ENCODE measurements at regions of chr11 and their contacts with region 1.

Region 1: GRCh38 chr11:62427630-62428233 is 8.9 kb downstream of the SCGB1A1 start:
- DNase-seq: peak; percentile 35
- ATAC-seq: peak; percentile 34
- H3K4me3 Mint-ChIP-seq: peak overlapping the region; percentile 2
- H3K27ac Mint-ChIP-seq: peak overlapping the region; percentile 84
- H3K4me1 Mint-ChIP-seq: peaks cover 79% of the 10 kb centered on the region
- H3K27me3 Mint-ChIP-seq: peaks cover 6% of the 10 kb centered on the region

Region 2: GRCh38 chr11:62295504-62295903 is 132.2 kb before region 1 on chr11:
- CTCF ChIA-PET with region 1: no interaction called
- POLR2A ChIA-PET with region 1: no interaction called
- DNase-seq: peak; percentile 33
- ATAC-seq: no peak
- H3K4me3 Mint-ChIP-seq: no peak overlapping the region
- H3K27ac Mint-ChIP-seq: no peak overlapping the region
- H3K4me1 Mint-ChIP-seq: no peaks in the 10 kb centered on the region
- H3K27me3 Mint-ChIP-seq: peaks cover 14% of the 10 kb centered on the region

Region 3: GRCh38 chr11:62400760-62401159 is 27.0 kb before region 1 on chr11:
- CTCF ChIA-PET with region 1: interaction called, 96 read pairs
- POLR2A ChIA-PET with region 1: no interaction called
- DNase-seq: no peak
- ATAC-seq: no peak
- H3K4me3 Mint-ChIP-seq: no peak overlapping the region
- H3K27ac Mint-ChIP-seq: no peak overlapping the region
- H3K4me1 Mint-ChIP-seq: peaks cover 51% of the 10 kb centered on the region
- H3K27me3 Mint-ChIP-seq: peaks cover 2% of the 10 kb centered on the region

Region 4: DNA sequence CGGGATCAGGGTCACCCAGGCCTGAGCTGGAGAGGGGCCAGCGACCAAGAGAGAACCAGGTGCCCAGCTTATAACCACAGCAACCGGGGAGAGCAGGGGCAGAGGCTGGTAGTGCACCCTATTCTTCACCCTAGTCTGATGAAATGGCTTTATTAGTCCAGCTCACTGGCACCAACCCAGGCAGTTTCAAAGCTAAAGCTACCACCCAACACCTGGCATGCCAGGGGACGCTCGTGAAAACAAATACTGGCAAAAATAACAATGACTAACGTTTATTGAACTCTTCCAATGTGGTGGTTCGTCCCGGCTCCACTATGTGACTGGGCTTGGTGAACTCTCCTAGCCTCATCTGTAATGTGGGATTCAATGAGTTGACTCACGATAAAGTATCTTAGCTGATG is 21.7 kb after region 1 on chr11:
- CTCF ChIA-PET with region 1: interaction called, 19 read pairs
- POLR2A ChIA-PET with region 1: interaction called, 3 read pairs
- DNase-seq: no peak
- ATAC-seq: no peak
- H3K4me3 Mint-ChIP-seq: no peak overlapping the region
- H3K27ac Mint-ChIP-seq: no peak overlapping the region
- H3K4me1 Mint-ChIP-seq: peaks cover 2% of the 10 kb centered on the region
- H3K27me3 Mint-ChIP-seq: peaks cover 28% of the 10 kb centered on the region

Region 5: DNA sequence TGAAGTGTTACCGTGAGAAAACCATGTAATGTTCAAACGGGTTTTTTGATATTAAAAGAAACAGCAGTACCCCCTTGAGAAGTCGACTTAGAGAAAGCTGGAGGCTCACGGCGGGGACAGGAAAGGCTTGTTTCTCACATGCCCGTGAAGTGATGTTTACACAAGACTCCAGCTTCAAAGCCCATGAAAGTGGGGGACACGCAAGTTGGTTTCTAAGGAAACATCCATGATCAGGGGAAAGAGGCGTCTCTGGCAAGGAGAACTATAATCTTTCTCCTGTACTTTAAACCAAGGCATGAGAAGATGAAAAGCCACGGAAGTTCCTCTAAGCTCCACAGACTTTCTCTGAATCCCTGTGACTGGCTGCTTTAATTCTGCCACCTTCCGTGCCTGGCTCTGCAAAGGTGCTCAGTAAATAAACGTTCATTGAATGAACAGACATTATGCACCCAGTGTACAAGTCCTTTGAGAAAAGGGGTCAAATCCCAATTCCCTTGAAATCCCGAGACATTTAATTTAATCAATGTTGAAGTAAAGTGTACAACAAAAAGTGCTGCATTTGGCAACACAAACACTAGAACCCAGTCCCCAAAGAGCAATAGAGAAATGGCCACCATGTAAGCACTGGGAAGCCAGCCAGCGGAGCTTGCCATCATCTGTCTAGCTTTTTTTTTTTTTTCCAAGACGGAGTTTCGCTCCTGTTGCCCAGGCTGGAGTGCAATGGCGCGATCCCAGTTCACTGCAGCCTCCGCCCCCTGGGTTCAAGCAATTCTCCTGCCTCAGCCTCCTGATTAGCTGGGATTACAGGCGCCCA is 60.2 kb after region 1 on chr11:
- CTCF ChIA-PET with region 1: interaction called, 15 read pairs
- POLR2A ChIA-PET with region 1: interaction called, 3 read pairs
- DNase-seq: no peak
- ATAC-seq: no peak
- H3K4me3 Mint-ChIP-seq: no peak overlapping the region
- H3K27ac Mint-ChIP-seq: no peak overlapping the region
- H3K4me1 Mint-ChIP-seq: no peaks in the 10 kb centered on the region
- H3K27me3 Mint-ChIP-seq: no peaks in the 10 kb centered on the region

Region 6: GRCh38 chr11:62556108-62556871 is 128.6 kb after region 1 on chr11:
- CTCF ChIA-PET with region 1: interaction called, 294 read pairs
- POLR2A ChIA-PET with region 1: interaction called, 10 read pairs
- DNase-seq: peak; percentile 94
- ATAC-seq: peak; percentile 72
- H3K4me3 Mint-ChIP-seq: peak overlapping the region; percentile 66
- H3K27ac Mint-ChIP-seq: peak overlapping the region; percentile 95
- H3K4me1 Mint-ChIP-seq: peaks cover 95% of the 10 kb centered on the region
- H3K27me3 Mint-ChIP-seq: no peaks in the 10 kb centered on the region

Region 7: DNA sequence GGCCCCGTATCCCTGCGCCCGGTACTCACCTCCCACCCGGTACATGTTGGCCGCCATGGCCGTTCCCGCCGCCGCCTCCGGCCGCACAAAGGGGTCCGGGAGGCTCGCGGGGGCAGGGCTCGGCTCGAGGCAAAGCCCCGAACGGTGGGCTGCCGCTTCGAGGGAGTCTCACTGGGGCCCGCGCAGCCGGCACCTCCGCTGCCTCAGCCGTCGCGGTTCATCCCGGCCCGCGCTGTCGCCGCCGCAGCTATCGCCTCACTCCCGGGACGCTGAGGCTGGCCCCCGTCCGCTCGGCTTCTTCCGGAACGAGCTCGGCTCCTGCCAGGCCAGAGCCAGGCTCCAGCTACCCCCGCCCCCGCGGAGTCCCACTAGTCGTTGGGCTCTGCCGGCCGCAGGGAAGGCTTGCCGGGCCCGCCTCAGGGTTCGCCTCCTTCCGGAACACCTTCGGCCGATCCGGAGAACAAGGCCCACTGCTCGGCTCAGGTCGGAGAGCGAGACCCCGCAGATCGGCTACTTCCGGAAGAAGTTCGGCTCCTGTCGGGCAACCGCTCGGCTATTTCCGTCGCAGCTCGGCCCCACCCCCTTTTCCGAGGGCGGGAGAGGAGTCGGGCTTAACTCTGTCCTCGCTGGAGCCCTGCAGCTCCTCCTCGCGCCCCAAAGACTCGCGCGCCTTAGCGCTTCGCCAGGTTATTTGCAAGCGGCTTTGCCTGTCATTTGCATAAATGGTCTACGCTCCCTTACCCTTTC is 173.8 kb after region 1 on chr11 and contains the start of gene MTA2:
- CTCF ChIA-PET with region 1: interaction called, 10 read pairs
- POLR2A ChIA-PET with region 1: no interaction called
- DNase-seq: peak; percentile 100
- ATAC-seq: peak; percentile 88
- H3K4me3 Mint-ChIP-seq: peak within 1 kb of the TSS; percentile 89
- H3K27ac Mint-ChIP-seq: peak within 1 kb of the TSS; percentile 88
- H3K4me1 Mint-ChIP-seq: peaks cover 52% of the 10 kb centered on the region
- H3K27me3 Mint-ChIP-seq: no peaks in the 10 kb centered on the region
- total RNA-seq, gene MTA2: 249 to 273 TPM